Calu3 (cell line): ENCODE measurements at regions of chr11 and their contacts with region 1.

Region 1: GRCh38 chr11:44036811-44037657 is 10.7 kb upstream of the ACCSL start:
- DNase-seq: peak; percentile 69
- H3K4me3 Mint-ChIP-seq: no peak overlapping the region
- H3K27ac Mint-ChIP-seq: no peak overlapping the region
- H3K4me1 Mint-ChIP-seq: no peaks in the 10 kb centered on the region
- H3K27me3 Mint-ChIP-seq: peaks cover 69% of the 10 kb centered on the region
- CTCF ChIP-seq: peak; percentile 69

Region 2: GRCh38 chr11:43784866-43785265 is 252.2 kb before region 1 on chr11:
- CTCF ChIA-PET with region 1: no interaction called
- intact Hi-C with region 1: no loop called
- DNase-seq: no peak
- H3K4me3 Mint-ChIP-seq: no peak overlapping the region
- H3K27ac Mint-ChIP-seq: no peak overlapping the region
- H3K4me1 Mint-ChIP-seq: no peaks in the 10 kb centered on the region
- H3K27me3 Mint-ChIP-seq: no peaks in the 10 kb centered on the region
- CTCF ChIP-seq: no peak

Region 3: DNA sequence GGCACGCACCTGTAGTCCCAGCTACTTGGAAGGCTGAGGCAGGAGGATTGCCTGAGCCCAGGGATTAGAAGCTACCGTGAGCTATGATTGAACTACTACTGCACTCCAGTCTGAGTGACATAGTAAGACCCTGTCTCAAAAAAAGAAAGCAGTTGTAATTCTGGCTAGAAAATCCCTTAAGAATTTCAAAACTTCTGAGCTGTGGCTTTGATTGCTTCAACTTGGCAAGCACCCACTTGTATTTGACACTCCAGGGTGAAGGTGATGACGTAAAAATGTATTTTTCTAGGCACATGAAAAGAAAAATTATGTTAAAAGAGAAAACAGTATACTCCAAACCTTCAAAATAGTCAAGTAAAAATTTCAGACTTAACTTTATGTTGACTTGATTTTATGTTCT is 180.0 kb before region 1 on chr11:
- CTCF ChIA-PET with region 1: no interaction called
- intact Hi-C with region 1: no loop called
- DNase-seq: no peak
- H3K4me3 Mint-ChIP-seq: no peak overlapping the region
- H3K27ac Mint-ChIP-seq: no peak overlapping the region
- H3K4me1 Mint-ChIP-seq: no peaks in the 10 kb centered on the region
- H3K27me3 Mint-ChIP-seq: no peaks in the 10 kb centered on the region
- CTCF ChIP-seq: no peak

Region 4: GRCh38 chr11:43952401-43953342 is 84.4 kb before region 1 on chr11:
- CTCF ChIA-PET with region 1: no interaction called
- intact Hi-C with region 1: loop called (anchors 5 kb)
- DNase-seq: no peak
- H3K4me3 Mint-ChIP-seq: no peak overlapping the region
- H3K27ac Mint-ChIP-seq: no peak overlapping the region
- H3K4me1 Mint-ChIP-seq: peaks cover 19% of the 10 kb centered on the region
- H3K27me3 Mint-ChIP-seq: peaks cover 24% of the 10 kb centered on the region
- CTCF ChIP-seq: no peak